Panc1 (cell line): ENCODE measurements at regions of chr3 and their contacts with region 1.

Region 1: DNA sequence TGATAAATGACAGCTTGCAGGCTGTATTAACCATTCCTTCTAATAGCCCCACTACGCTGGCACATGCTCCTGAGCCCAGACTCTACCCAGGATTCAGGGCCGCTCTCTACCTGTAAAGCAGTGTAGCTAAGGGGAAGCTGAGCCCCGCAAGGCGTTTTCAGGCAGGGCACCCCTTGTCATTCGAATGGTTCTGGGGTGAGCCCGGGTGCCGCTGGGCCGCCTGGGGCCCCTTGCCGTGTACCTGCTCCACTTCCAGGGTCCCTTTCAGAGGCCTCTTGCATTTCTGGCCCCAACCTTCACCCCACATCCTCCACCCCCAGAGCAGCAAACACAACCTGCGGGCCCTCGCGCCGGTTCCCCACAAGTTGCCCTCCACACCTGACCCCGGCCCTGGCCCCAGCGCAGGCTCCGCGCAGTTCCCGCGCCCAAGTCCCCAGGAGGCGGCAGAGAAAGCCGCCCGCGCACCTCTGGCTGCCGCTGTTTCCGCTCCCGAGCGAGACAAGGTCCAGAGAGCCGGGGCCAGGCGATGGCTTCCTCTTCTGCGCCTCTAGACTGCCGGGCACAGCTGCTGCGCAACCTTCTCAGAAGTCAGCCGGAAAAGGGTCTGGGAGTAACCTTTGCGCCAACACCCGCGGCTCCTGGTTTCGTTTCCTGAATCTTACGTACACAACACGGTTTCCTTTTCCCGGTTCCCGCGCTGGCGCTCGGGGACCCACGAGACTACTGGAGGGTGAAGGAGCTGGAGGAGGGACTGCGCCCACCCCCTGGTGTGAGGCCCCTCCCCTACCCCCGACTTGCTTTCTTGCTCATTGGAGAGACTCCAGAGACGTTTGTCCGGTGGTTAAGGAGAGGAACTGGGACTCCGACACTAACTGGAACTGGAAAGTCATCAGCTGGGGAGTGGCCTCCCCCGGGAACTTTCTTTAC is at the start of gene PLSCR1:
- DNase-seq: peak; percentile 83
- ATAC-seq: peak; percentile 97
- H3K4me3 ChIP-seq: peak within 1 kb of the TSS; percentile 82 to 83
- H3K27ac ChIP-seq: peak within 1 kb of the TSS; percentile 93
- H3K4me1 ChIP-seq: peaks cover 16% of the 10 kb centered on the region
- H3K27me3 ChIP-seq: no peaks in the 10 kb centered on the region
- CTCF ChIP-seq: no peak
- total RNA-seq, gene PLSCR1: 52.7 TPM

Region 2: DNA sequence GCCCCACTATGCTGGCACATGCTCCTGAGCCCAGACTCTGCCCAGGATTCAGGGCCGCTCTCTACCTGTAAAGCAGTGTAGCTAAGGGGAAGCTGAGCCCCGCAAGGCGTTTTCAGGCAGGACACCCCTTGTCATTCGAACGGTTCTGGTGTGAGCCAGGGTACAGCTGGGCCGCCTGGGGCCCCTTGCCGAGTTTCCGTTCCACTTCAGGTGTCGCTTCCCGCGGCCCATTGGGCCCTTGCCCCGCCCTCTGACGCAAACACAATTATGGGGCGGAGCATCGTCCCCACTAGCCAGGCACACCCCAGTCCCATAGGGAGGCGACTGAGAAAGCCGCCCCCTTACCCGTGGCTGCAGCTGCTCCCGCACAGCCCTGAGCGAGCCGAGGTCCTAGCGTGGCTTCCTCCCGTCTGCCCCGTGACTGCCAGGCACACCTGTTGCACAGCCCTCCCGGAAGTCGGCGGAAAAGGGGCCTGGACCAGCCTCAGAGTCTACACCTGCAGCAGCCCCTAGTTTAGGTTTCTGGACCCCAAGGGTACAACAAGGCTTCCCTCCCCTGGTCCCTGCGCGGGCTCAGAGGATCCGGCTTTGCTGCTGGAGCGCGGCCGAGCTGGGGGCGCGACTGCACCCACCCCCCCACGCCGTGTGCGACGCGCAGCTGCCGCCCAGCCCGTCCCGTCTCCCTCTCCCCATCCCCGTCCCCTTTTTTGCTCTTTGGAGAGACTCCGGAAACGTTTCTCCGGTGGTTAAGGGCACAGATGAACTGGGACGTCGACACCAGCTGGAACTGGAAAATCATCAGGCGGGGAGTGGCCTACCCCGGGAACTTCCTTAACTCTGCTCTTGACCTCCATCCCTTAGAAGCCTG is 74.9 kb before region 1 on chr3 and contains the start of gene PLSCR2:
- CTCF ChIA-PET with region 1: no interaction called
- POLR2A ChIA-PET with region 1: interaction called, 8 read pairs
- in situ Hi-C with region 1: no loop called
- intact Hi-C with region 1: loop called (anchors 2 kb)
- DNase-seq: no peak
- ATAC-seq: peak; percentile 89
- H3K4me3 ChIP-seq: peak within 1 kb of the TSS; percentile 57 to 75
- H3K27ac ChIP-seq: peak within 1 kb of the TSS; percentile 89
- H3K4me1 ChIP-seq: peaks cover 40% of the 10 kb centered on the region
- H3K27me3 ChIP-seq: no peaks in the 10 kb centered on the region
- CTCF ChIP-seq: no peak
- total RNA-seq, gene PLSCR2: 0.54 TPM